Left cardiac atrium (tissue), 4 donors: ENCODE measurements at regions of chr1 and their contacts with region 1.

Region 1: GRCh38 chr1:77143529-77144121 is 75.6 kb downstream of the PIGK start:
- DNase-seq: no peak
- ATAC-seq: no peak

Region 2: DNA sequence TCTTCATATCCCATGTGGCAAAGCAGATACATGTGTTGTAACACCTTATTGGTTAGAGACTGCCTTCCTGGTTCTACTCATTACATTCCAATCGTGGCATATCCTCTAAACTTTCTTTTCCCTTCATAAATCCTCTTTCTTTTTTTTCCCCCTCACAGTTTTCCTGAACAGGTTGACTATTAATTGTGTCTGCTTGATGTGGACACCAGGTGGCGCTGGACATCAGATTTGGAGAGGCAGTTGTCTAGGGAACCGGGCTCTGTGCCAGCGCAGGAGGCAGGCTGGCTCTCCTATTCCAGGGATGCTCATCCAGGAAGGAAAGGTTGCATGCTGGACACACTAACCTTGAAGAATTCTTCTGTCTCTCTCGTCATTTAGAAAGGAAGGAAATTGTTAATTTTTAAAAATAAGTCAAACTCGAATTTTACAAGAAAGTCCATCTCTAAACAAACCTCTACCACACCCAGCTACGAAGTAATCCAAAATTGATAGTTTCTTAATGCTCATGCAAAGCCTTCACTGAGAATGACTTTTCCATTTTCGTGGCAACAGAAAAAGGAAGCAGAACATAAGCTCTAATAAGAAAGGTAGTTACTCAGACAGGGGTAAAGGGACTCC is 1152.0 kb before region 1 on chr1:
- intact Hi-C with region 1: loop called in 1 of 2 experiments (anchors 5 kb)
- DNase-seq: peak; percentile 92
- ATAC-seq: peak; percentile 65 to 67

Region 3: GRCh38 chr1:76154206-76154956 is 989.2 kb before region 1 on chr1:
- intact Hi-C with region 1: loop called in 1 of 2 experiments (anchors 5 kb)
- DNase-seq: peak; percentile 76
- ATAC-seq: peak; percentile 90 to 94

Region 4: DNA sequence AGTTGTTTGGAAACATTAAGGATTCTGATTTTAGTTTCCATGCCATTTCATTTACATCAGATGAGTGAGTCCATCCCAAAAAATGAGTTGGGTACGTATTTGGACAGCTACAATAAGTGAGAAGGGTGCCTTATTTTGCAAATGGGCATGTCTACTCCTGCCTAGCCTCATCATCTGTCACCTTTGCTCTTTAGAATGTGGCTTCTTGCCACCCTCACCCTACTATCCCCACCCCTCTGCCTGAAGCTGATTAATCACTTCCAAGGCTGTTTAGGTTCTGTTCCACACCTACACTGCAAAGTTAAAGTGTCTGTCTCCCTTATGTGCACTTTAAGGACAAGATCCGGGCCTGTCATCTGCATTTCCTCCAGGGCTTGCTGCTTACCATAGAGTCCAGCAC is 215.1 kb before region 1 on chr1:
- intact Hi-C with region 1: no loop called
- DNase-seq: no peak
- ATAC-seq: no peak

Region 5: DNA sequence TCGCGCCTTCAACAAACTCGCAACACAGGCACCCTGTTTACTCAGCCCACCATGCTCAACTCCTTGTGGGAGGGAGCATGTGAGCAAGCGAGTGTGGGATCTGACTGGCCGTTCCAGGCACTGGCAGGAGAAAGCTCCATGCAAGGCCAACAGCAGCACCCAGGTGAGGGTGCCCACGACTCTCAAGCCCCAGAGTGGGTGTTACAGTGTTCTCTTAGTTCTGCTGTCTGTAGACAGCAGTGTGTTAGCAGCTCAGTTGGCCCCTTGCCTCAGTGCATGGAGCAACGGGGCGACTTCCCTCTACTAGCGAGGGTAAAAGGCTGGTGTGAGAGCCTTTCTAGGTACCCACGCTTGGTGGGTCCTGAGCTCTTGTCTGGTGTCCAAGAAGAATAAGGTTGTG is 39.0 kb before region 1 on chr1:
- intact Hi-C with region 1: no loop called
- DNase-seq: no peak
- ATAC-seq: no peak

Region 6: DNA sequence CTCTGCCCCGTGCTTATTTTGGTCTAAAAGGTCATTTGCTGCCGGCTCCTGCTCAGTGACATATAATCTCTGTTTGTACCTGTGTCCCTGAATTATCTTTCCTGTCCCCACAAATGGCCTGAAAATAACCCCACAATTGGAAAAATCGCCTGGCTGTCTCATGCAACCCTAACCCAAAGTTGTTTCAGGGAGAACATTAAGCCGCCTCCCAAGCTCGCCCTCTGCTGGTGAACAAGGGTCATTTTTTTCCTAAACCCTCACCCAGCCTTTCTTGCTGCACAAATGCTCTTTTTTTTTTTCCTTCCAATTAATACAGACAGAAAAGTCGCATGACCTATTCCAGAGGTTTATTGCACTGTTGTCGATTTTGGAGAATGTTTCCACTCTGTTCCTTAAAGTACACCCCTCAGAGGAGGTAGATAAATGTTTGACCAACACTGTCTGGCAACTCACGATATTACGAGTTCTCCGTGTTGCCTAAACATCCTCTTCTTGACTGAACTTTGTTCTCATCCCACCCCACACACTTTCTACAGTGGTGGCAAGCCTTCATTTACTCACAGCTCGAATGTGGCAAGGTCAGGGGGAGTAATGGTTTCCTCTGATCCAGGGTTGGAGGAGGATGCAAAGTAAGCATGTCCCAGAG is 390.2 kb after region 1 on chr1:
- intact Hi-C with region 1: loop called (anchors 2 to 10 kb)
- DNase-seq: peak; percentile 60
- ATAC-seq: peak; percentile 66 to 67